ENCODE measurements at regions of chr5 and their contacts with region 1.

Region 1: DNA sequence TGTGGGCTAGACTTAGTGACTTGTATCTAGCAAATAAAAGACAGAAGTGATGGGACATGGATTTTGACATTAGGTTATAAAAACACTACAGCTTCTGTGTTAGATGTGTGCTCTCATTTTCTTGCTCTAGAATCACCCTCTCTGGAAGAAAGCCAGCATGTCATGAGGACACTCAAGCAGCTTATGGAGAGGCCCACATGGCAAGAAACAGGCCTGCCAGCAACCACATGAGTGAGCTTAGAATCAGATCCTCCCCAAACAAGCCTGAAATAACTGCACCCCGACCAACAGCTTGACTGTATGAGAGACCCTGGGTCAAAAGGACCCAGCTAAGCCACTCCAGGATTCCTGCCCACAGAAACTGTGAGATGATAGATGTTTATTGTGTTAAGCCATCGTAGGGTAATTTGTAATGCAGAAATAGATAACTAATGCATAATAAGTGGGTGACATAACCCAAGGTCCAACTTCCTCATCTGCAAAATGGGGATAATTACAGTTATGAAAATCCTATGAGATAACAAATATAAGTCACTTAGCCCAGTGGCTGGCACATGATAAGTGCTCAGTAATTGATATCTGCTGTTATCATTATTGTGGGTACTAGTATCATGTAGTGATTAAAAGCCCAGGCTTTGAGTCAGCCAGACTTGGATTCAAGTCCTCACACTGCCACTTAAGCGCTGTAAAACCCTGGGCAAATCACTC is 86.5 kb downstream of the KLHL3 start:
- DNase-seq: peak in 1 of 2 donors; percentile 44
- ATAC-seq: peak; percentile 38 to 84 (median 62)
- H3K4me3 ChIP-seq: no peak overlapping the region
- H3K27ac ChIP-seq: peak overlapping the region in 6 of 10 donors; percentile 2 to 60 (median 40)
- H3K4me1 ChIP-seq: peaks cover 0 to 46% (median 11%) of the 10 kb centered on the region in 9 donors
- H3K27me3 ChIP-seq: no peaks in the 10 kb centered on the region
- CTCF ChIP-seq: no peak

Region 2: GRCh38 chr5:138148811-138149210 is 499.4 kb after region 1 on chr5:
- intact Hi-C with region 1: loop called in 1 of 10 experiments (anchors 10 kb)
- DNase-seq: peak in 1 of 2 donors; percentile 40
- ATAC-seq: peak in 7 of 8 donors; percentile 71 to 82 (median 77)
- H3K4me3 ChIP-seq: no peak overlapping the region
- H3K27ac ChIP-seq: no peak overlapping the region
- H3K4me1 ChIP-seq: peaks cover 0 to 6% (median 0%) of the 10 kb centered on the region in 9 donors
- H3K27me3 ChIP-seq: no peaks in the 10 kb centered on the region
- CTCF ChIP-seq: no peak